GM12878 (cell line): ENCODE measurements at regions of chr18 and their contacts with region 1.

Region 1: DNA sequence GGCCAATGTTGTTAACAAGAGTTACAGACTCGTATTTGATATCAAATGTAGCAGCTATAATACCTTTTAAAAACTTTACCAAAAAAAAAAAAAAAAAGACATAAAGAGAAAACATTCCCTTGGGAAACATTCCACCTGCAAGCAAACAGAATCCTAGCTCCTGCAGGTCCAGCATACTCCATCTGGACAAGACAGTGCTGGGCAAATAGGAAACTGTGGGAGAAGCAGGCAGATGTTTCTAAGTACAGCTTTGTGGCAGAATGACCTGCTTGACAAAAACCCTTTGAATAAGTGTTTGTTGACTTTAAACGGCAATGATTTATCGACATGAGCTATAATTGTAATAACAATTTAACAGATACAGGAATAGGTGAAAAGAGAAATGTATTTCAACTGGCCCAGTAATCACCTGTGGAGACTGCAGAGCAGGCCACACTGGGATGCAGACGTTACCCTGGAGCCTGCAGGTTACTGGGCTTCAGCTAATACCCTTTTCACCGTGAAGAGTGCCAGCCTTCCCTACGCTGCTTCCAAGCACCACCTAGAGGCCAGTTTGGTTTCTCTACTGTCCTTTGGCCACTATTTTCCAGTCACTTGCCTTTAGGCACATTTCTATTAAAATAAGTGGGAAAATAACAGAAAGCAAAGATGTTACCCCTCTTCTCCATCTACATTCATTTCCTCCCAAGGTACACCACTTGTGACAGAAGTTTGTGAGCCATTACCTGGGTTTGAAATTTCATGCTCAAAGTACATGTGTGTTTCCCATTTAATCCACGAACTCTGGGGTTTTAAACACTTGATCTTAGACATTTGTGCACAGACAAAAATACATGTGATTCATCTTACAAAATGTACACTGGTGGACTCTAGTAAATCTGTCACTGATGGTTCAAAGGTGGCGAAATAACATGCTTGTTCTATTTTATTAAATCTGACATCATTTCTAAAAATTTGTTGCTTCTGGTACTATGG is 96.9 kb upstream of the ZNF397 start:
- DNase-seq: no peak
- ATAC-seq: peak; percentile 97
- H3K4me3 ChIP-seq: no peak overlapping the region
- H3K27ac ChIP-seq: no peak overlapping the region
- H3K4me1 ChIP-seq: peaks cover 4% of the 10 kb centered on the region
- H3K27me3 ChIP-seq: no peaks in the 10 kb centered on the region
- CTCF ChIP-seq: peak; percentile 49 to 77 (median 74)
- EP300 ChIP-seq: no peak
- POLR2A ChIP-seq: no peak
- RAD21 ChIP-seq: peak; percentile 69

Region 2: DNA sequence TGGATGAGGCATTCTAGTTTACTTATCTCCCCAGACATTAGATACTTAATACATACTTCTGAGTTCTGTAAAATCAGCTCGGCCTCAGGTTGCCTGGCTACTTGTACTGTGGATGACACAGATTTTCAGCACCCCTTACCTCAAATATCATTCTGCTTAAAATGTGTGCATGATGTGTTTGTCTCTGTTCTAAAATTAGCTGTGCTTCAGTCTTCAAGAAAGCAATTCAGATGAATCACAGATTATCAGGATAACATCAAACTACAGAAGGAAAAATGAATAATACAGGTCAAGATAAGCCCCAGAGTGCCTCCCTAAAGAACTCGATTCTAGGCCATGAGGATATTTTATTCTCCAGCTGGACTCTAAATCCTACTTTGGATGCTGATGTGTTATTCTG is 124.0 kb before region 1 on chr18:
- CTCF ChIA-PET with region 1: interaction called, 157 read pairs
- POLR2A ChIA-PET with region 1: no interaction called
- RAD21 ChIA-PET with region 1: interaction called, 83 read pairs
- SMC1A ChIA-PET with region 1: interaction called, 145 read pairs
- in situ Hi-C with region 1: no loop called
- intact Hi-C with region 1: no loop called
- DNase-seq: no peak
- ATAC-seq: no peak
- H3K4me3 ChIP-seq: no peak overlapping the region
- H3K27ac ChIP-seq: no peak overlapping the region
- H3K4me1 ChIP-seq: no peaks in the 10 kb centered on the region
- H3K27me3 ChIP-seq: no peaks in the 10 kb centered on the region
- CTCF ChIP-seq: no peak
- EP300 ChIP-seq: no peak
- POLR2A ChIP-seq: no peak
- RAD21 ChIP-seq: no peak

Region 3: GRCh38 chr18:35132021-35132902 is 11.6 kb before region 1 on chr18:
- CTCF ChIA-PET with region 1: interaction called, 7 read pairs
- POLR2A ChIA-PET with region 1: no interaction called
- RAD21 ChIA-PET with region 1: no interaction called
- SMC1A ChIA-PET with region 1: interaction called, 11 read pairs
- in situ Hi-C with region 1: no loop called
- intact Hi-C with region 1: no loop called
- DNase-seq: no peak
- ATAC-seq: no peak
- H3K4me3 ChIP-seq: no peak overlapping the region
- H3K27ac ChIP-seq: no peak overlapping the region
- H3K4me1 ChIP-seq: no peaks in the 10 kb centered on the region
- H3K27me3 ChIP-seq: no peaks in the 10 kb centered on the region
- CTCF ChIP-seq: no peak
- EP300 ChIP-seq: no peak
- POLR2A ChIP-seq: no peak
- RAD21 ChIP-seq: no peak